GM10248 (cell line): ENCODE measurements at regions of chr1 and their contacts with region 1.

Region 1: GRCh38 chr1:116724765-116725375 is 29.4 kb upstream of the CD2 start:
- DNase-seq: peak; percentile 56
- CTCF ChIP-seq: peak; percentile 67

Region 2: GRCh38 chr1:116465845-116466685 is 258.8 kb before region 1 on chr1:
- CTCF ChIA-PET with region 1: no interaction called
- POLR2A ChIA-PET with region 1: no interaction called
- DNase-seq: no peak
- CTCF ChIP-seq: no peak

Region 3: DNA sequence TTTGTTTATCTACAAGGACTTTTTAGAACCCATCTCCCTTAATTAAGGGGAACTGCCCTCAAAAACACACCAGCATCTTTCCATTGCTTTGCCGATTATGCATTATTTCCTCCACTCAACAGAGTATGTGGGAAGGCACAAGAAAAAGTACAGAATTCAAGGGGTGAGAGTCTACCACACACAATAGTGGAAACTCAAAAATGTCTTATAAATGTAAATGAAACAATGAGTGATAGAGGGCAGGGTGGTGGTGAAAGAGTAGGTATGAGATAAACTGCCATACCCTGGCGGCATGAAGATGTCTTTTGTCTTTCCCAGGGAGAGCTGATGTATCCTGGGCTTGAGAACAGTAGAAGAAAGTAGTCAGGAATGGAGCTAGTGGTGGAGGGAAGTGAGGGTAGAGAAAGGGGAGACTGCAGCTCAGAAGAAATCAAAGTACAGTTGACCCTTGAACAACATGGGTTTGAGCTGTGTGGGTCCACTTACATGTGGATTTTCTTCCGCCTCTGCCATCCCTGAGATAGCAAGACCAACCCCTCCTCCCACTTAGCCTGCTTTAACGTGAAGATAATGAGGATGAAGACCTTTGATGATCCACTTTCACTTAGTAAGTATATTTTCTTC is 178.4 kb before region 1 on chr1:
- CTCF ChIA-PET with region 1: no interaction called
- POLR2A ChIA-PET with region 1: no interaction called
- DNase-seq: no peak
- CTCF ChIP-seq: no peak

Region 4: DNA sequence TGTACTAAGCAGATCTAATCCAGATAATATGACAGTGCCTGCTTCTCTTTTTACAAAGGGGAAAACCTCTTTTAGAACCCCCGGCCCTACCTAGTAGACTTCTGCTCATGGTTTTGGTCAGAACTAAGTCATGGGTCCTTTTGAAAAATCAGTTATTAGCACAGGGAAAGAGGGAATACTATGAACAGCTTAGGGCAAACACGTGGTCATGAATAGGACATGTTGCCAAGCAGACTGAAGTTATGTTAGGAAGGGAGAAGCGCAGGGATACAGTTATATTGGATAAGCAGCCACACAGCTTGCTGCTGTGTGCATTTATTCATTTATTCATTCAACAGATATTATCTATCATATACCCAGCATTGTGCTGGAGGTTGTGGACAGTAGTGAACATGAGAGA is 32.0 kb before region 1 on chr1:
- CTCF ChIA-PET with region 1: interaction called, 10 read pairs
- POLR2A ChIA-PET with region 1: no interaction called
- DNase-seq: no peak
- CTCF ChIP-seq: no peak

Region 5: DNA sequence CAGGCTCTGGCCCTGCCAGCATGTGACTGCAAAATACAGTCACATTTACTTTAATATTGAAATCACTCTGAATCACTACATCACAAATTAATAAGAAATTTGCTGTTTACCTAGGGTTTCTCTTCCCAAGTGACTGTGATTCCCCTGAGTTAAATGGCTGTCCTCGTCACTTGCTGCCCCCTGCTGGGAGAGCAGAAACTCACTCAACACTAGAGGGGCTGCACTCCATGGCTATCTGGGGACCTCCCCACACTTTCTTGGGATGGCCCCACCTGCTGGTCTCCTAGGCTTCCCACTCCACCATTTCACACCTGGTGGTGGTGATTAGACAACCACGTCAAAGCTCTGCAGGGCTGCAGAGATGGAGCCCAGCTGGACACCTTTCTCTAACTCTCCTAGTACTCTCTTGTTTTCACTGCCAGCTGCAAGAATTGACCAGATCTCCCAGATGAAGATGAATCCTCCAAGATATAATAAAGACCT is 92.8 kb after region 1 on chr1:
- CTCF ChIA-PET with region 1: interaction called, 11 read pairs
- POLR2A ChIA-PET with region 1: no interaction called
- DNase-seq: peak; percentile 76
- CTCF ChIP-seq: peak; percentile 63

Region 6: DNA sequence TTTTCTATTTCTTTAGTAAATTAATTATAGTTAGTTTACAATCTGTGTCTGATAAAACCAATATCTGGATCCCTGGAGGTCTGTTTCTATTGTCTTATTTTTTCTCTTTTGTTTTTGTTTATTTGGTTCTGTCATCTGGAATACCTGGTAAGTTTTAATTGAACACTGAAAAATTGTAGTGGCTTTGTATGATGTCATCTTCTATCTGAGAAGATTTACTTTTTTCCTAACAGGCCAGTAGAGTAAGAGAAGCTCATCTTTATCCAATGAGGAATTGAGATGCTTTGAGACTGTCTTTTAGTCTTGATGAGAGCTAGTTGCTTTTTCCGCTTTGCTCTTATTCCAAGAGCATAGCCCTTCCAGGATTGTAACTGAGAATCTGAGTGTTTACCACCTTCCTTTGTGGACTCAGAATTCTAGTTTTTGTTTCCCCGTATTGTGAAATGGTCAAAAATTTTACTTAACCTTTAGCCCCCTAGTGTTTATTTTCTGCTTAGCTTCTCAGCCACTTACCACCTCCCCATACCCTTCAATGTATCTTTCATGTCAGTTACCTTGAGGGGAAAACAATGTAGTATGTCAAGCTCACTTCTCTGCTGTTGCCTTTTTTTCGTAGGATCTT is 209.8 kb after region 1 on chr1:
- CTCF ChIA-PET with region 1: interaction called, 16 read pairs
- POLR2A ChIA-PET with region 1: no interaction called
- DNase-seq: peak; percentile 26
- CTCF ChIP-seq: peak; percentile 27